HEK293 (cell line): ENCODE measurements at regions of chr19 and their contacts with region 1.

Region 1: GRCh38 chr19:32599736-32600157 is 18.8 kb downstream of the PDCD5 start:
- H3K4me3 ChIP-seq: no peak overlapping the region
- H3K27ac ChIP-seq: no peak overlapping the region
- H3K4me1 ChIP-seq: no peaks in the 10 kb centered on the region
- CTCF ChIP-seq: peak; percentile 57; the same call in 1 of the 2 replicates

Region 2: DNA sequence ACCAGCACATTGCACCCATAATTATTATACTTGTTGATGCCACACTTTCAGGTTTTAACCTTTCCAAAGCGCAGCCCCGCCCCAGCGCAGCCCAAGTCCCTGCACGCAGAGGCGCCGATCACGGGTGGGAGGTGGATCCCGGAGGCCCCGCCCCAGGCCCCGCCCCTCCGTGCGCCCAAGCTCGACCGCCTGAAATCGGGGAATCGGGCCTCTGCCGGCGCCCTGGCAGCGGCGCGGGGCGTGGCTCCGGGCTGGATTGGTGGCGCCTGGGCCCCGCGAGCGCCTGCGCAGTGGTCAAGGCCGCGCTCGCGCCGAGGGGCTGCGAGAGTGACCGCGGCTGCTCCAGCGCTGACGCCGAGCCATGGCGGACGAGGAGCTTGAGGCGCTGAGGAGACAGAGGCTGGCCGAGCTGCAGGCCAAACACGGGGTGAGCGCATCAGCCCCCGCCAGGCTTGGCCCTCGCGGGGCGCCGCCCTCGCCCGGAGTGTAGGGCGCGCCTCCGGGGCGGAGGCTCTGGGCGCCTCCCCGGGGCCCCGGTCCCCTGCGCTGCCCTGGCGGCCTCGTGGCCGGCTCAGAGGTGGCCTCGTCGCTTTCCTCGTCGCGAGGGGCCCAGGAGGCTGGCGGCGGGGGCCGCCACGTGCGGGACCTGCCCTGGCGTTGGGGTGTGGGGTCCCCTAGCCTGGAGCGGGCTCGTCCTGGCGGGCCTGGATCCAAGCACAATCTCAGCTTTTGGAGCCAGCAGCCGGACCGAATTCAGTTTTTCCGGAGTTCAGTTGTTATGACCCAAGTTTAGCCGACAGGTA is 18.6 kb before region 1 on chr19 and contains the start of gene PDCD5:
- CTCF ChIA-PET with region 1: interaction called, 11 read pairs
- POLR2A ChIA-PET with region 1: interaction called, 4 read pairs
- H3K4me3 ChIP-seq: peak within 1 kb of the TSS; percentile 76
- H3K27ac ChIP-seq: peak within 1 kb of the TSS; percentile 98
- H3K4me1 ChIP-seq: peaks cover 21% of the 10 kb centered on the region
- CTCF ChIP-seq: no peak

Region 3: DNA sequence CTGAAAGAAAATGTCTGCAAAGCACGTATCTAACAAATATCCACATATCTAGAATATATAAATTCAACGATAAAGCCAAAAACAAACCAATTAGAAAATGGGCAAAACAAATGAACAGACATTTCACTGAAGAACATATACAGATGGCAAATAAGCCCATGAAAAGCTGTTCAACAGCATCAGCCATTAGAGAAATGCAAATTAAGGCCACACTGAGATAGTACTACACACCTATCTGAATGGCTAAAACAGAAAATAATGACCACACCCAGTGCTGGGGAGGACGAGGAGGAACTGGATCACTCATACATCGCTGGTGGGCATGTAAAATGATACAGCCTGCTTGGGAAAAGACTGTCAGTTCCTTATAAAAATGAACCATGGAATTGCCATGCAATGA is 13.3 kb after region 1 on chr19:
- CTCF ChIA-PET with region 1: interaction called, 12 read pairs
- POLR2A ChIA-PET with region 1: no interaction called
- H3K4me3 ChIP-seq: no peak overlapping the region
- H3K27ac ChIP-seq: no peak overlapping the region
- H3K4me1 ChIP-seq: no peaks in the 10 kb centered on the region
- CTCF ChIP-seq: no peak

Region 4: GRCh38 chr19:32669310-32669709 is 69.6 kb after region 1 on chr19:
- CTCF ChIA-PET with region 1: interaction called, 10 read pairs
- POLR2A ChIA-PET with region 1: no interaction called
- H3K4me3 ChIP-seq: no peak overlapping the region
- H3K27ac ChIP-seq: no peak overlapping the region
- H3K4me1 ChIP-seq: peaks cover 30% of the 10 kb centered on the region
- CTCF ChIP-seq: no peak